Activated T-helper 1 cell treated with anti-CD3 and anti-CD28 coated beads, Interleukin-12 subunit alpha, Interleukin-12 subunit beta, Interleukin-2, Interleukin-4 antibody, amounts not matched to agents 30 ng/mL and 10 ng/mL and 1 ng/mL, durations not matched to agents 14 hours and 24 hours and 36 hours (primary cell): ENCODE measurements at regions of chr6 and their contacts with region 1.

Region 1: GRCh38 chr6:20212392-20213217 is at the start of gene MBOAT1:
- DNase-seq: peak; percentile 72
- H3K4me3 Mint-ChIP-seq: peak within 1 kb of the TSS; percentile 93
- H3K27ac Mint-ChIP-seq: peak within 1 kb of the TSS; percentile 95
- H3K4me1 Mint-ChIP-seq: peaks cover 48% of the 10 kb centered on the region
- H3K27me3 Mint-ChIP-seq: peaks cover 7% of the 10 kb centered on the region
- total RNA-seq, gene MBOAT1: 12.2 and 13.5 TPM in 2 replicates

Region 2: DNA sequence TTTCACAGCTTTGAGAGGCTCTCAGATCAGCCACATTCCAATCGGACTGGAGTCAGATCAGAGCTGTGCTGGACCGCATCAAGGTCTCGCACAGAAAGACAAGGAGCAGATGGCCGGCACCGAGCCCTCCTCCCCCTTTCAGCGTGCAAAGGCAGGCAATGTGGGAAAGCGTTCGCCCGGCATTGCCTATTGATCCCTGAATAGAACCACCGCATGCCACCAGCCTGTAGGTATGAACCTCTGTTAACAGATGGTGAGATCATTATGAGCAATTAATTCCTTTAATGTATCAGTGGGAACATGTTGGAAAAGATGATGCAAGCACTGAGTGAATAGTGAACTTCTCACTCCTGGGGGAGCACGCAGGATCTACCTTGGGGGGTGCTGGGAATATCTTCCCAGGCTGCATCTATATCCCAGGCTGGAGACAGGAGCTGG is 492.9 kb before region 1 on chr6:
- intact Hi-C with region 1: no loop called
- DNase-seq: no peak
- H3K4me3 Mint-ChIP-seq: no peak overlapping the region
- H3K27ac Mint-ChIP-seq: no peak overlapping the region
- H3K4me1 Mint-ChIP-seq: no peaks in the 10 kb centered on the region
- H3K27me3 Mint-ChIP-seq: no peaks in the 10 kb centered on the region

Region 3: GRCh38 chr6:20092071-20092566 is 120.5 kb before region 1 on chr6:
- intact Hi-C with region 1: loop called (anchors 1 kb)
- DNase-seq: no peak
- H3K4me3 Mint-ChIP-seq: no peak overlapping the region
- H3K27ac Mint-ChIP-seq: no peak overlapping the region
- H3K4me1 Mint-ChIP-seq: no peaks in the 10 kb centered on the region
- H3K27me3 Mint-ChIP-seq: no peaks in the 10 kb centered on the region

Region 4: GRCh38 chr6:20173833-20174792 is 38.5 kb before region 1 on chr6:
- intact Hi-C with region 1: loop called (anchors 2 kb)
- DNase-seq: no peak
- H3K4me3 Mint-ChIP-seq: peak overlapping the region; percentile 53
- H3K27ac Mint-ChIP-seq: peak overlapping the region; percentile 41
- H3K4me1 Mint-ChIP-seq: peaks cover 24% of the 10 kb centered on the region
- H3K27me3 Mint-ChIP-seq: no peaks in the 10 kb centered on the region

Region 5: DNA sequence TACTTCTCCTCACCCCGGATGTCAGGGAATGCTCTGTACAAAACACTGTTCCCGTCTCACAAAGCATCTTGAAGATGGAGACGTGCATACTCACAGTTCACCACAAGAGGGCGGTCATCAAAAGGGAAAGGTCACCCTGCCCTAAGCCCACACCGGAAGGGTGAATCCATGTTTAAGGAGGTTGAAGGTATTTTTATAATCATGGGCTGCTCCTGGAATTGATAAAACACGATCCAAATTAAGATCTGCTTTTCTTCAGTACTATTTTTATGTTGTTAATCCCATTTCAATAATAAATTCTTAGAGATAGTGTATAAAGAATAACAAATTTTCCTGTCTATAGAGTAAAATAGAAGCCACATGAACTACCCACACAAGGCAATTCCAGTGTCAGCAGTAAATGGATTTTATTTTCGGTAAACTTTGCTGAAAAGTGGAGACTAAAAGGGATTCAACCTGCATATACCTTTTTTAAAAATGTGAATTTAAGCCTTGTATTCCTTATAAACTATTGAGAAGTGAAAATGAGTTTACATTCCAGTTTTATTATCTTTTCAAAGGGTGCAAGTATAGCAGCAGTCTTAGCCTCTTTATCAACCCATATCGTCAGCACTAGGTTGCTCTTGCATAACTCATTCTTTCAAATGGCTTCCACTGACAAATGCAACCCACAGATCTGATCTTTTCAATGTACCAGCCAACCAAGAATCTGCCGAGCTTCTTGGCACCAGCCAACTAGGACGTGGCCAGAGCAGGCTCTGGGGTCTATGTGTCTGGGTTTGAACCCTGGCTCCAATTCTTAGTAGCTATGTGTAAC is 79.4 kb after region 1 on chr6:
- intact Hi-C with region 1: loop called (anchors 2 kb)
- DNase-seq: peak; percentile 60
- H3K4me3 Mint-ChIP-seq: no peak overlapping the region
- H3K27ac Mint-ChIP-seq: no peak overlapping the region
- H3K4me1 Mint-ChIP-seq: peaks cover 41% of the 10 kb centered on the region
- H3K27me3 Mint-ChIP-seq: peaks cover 3% of the 10 kb centered on the region

Region 6: DNA sequence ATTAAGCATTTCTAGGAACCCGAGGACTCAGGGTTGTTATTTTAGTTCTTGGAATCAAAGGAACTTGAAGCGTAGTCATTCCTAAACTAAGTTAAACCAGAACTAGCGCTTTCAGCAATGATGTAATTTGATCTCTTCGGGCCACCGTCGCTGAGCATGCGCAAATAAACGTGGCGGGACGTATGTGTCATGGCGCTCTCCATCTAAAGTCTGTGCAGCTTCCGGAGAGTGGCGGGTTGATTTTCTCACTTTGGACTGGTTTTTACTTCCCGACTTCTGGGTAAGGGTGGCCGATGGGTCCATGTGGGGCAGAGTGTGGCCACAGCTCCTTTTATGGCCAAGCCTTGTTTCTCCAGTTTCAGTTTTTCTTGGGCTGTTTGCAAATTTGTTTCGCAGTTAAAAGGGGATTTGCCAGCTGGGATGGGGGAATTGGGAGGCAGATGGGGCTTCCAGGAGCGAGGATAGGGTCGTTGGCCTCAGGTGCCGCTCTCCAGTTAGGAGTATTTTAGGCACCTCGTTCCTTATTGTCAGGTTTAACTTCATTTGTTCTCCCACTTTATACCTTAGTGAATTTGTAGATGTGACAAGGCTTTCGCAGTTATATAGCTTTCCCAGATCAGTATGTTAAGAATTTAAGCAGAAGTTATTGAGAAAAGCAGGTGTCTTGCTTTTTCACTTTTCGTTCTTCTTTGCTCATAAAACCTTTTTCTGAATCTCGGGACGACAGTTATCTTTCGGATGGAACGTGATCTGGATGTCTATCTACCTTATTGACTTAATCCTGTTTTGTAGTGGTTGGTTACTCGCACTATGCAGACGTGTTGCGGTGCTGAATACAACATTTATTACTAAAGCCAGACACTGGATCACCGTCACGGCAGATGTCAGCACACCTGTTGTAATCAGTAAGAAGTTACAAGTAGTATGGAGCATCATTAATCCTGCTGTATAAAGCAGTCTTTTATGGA is 322.0 kb after region 1 on chr6 and contains the start of gene CDKAL1:
- intact Hi-C with region 1: loop called (anchors 1 kb)
- DNase-seq: peak; percentile 91
- H3K4me3 Mint-ChIP-seq: peak within 1 kb of the TSS; percentile 98
- H3K27ac Mint-ChIP-seq: peak within 1 kb of the TSS; percentile 97
- H3K4me1 Mint-ChIP-seq: peaks cover 54% of the 10 kb centered on the region
- H3K27me3 Mint-ChIP-seq: peaks cover 3% of the 10 kb centered on the region
- total RNA-seq, gene CDKAL1: 32.2 and 32.6 TPM in 2 replicates